PC-9 (cell line): ENCODE measurements at regions of chr9 and their contacts with region 1.

Region 1: DNA sequence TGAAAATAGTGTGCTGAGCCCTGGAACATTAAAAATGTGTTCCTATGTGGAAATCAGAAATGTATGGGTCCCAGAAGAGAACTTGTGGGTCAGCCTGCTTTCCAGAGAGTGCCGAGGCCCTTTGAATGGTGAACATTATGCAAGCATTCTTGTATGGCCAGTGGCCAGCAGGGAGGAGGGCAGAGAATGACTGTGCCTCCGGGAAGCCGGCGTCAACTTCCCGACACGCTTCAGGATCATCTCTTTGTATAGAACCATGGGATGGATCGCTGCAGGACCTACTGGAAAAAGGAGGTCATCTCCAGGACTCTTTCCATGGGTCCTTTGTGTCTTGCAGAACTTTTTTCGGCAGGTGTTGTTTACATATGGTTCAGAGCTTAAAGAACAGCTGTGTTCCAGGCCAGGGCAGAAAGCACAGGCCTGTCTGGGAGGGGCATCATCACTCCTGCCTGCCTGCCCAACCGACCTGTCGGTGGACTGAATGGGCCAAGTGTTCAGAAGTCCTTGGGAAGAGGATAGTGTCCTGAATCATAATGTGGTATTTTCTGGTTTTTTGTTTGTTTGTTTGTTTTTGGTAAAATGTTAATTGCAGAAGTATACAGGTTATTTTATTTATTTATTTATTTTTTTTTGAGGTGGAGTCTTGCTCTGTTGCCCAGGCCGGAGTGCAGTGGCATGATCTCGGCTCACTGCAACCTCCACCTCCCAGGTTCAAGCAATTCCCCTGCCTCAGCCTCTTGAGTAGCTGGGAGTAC is 9.0 kb downstream of the PRRC2B start:
- DNase-seq: peak in 1 of 2 experiments; percentile 69
- H3K4me3 ChIP-seq: no peak overlapping the region
- H3K27ac ChIP-seq: no peak overlapping the region
- H3K4me1 ChIP-seq: peaks cover 14% of the 10 kb centered on the region
- H3K27me3 ChIP-seq: no peaks in the 10 kb centered on the region
- CTCF ChIP-seq: no peak

Region 2: GRCh38 chr9:131349881-131350563 is 52.9 kb before region 1 on chr9:
- CTCF ChIA-PET with region 1: no interaction called
- POLR2A ChIA-PET with region 1: no interaction called
- intact Hi-C with region 1: loop called (anchors 5 kb)
- DNase-seq: peak; percentile 58 to 88
- H3K4me3 ChIP-seq: peak overlapping the region; percentile 41; the same call in 1 of the 2 replicates
- H3K27ac ChIP-seq: no peak overlapping the region
- H3K4me1 ChIP-seq: no peaks in the 10 kb centered on the region
- H3K27me3 ChIP-seq: no peaks in the 10 kb centered on the region
- CTCF ChIP-seq: peak; percentile 79

Region 3: GRCh38 chr9:131475956-131476776 is 73.3 kb after region 1 on chr9:
- CTCF ChIA-PET with region 1: no interaction called
- POLR2A ChIA-PET with region 1: no interaction called
- intact Hi-C with region 1: no loop called
- DNase-seq: no peak
- H3K4me3 ChIP-seq: no peak overlapping the region
- H3K27ac ChIP-seq: no peak overlapping the region
- H3K4me1 ChIP-seq: no peaks in the 10 kb centered on the region
- H3K27me3 ChIP-seq: no peaks in the 10 kb centered on the region
- CTCF ChIP-seq: no peak; the same call in none of the 2 replicates